Activated CD8-positive, alpha-beta T cell treated with anti-CD3 and anti-CD28 coated beads, Interleukin-2, amount 10 ng/mL, durations not matched to agents 7 days and 5 days (primary cell): ENCODE measurements at regions of chr12 and their contacts with region 1.

Region 1: DNA sequence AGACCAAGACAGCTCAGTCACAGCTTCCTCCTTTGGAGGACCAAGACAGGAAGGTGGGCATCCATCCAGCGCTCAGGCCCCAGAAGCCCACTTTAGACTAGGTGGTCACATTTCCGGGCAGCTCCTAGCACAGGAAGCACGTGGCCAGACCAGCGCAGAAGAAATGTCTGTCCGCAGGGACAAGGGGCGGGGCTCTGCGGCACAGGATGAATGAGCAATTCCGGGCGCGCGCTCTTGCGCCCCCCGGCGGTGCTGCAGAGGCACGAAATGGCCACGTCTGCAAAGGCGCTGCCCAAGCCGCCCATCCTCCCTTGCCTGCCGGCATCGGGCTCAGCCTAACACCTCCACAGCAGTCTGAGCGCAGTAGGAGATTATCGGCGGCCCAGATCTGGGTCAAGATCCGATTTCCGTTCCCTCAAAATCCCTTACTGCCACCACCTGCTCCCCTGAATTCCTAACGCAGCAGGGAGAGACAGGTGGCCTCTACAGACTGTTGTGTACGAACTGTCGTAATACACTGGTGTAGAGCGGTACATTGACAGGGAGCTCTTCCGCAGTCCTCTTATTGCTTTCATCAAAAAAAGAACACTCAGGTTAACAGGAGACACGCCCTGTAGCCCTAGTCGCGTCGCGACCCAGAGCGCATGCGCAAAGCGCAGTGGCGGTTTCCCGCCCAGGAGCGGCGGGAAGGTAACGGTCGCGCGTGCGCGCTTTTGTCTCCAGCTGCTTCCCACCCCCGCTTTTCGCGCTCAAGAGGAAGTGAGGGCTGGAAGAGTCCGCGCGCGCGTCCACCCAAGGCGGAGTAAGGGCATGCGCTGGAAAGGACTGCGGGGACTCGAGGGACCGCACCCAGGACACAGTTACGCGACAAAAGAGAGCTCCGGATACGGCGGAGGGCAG is 794 bp downstream of the TUBA1B start:
- DNase-seq: peak; percentile 93
- ATAC-seq: peak; percentile 59
- H3K4me3 Mint-ChIP-seq: peak overlapping the region; percentile 98
- H3K27ac Mint-ChIP-seq: peak overlapping the region; percentile 99
- H3K4me1 Mint-ChIP-seq: peaks cover 53% of the 10 kb centered on the region
- H3K27me3 Mint-ChIP-seq: no peaks in the 10 kb centered on the region

Region 2: GRCh38 chr12:49069507-49070346 is 60.7 kb before region 1 on chr12 and contains the start of gene RHEBL1:
- CTCF ChIA-PET with region 1: interaction called, 46 read pairs
- POLR2A ChIA-PET with region 1: interaction called, 39 read pairs
- DNase-seq: peak; percentile 100
- ATAC-seq: peak; percentile 100
- H3K4me3 Mint-ChIP-seq: peak within 1 kb of the TSS; percentile 100
- H3K27ac Mint-ChIP-seq: peak within 1 kb of the TSS; percentile 97
- H3K4me1 Mint-ChIP-seq: peaks cover 31% of the 10 kb centered on the region
- H3K27me3 Mint-ChIP-seq: no peaks in the 10 kb centered on the region
- total RNA-seq, gene RHEBL1: 9.5 to 9.9 TPM

Region 3: DNA sequence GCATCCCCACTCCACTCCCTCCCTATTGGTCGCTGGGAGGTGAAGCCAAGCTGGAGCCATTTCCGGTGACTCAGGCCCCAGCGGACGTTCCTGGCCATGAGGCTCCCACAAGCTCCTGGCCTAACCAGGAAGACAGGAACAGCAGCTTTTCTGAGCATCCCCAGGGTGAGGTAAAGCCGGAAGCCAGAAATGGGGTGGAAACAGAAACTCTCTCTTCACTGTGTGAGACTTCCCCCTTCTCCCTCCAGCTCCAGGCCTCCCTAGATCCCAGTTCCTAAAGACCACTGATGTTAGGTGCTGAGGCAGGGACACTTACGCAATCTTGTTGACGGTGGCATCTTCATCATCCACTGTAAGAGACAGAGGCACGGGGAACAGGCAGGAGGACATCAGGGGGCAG is 24.8 kb before region 1 on chr12:
- CTCF ChIA-PET with region 1: interaction called, 46 read pairs
- POLR2A ChIA-PET with region 1: interaction called, 165 read pairs
- DNase-seq: no peak
- ATAC-seq: no peak
- H3K4me3 Mint-ChIP-seq: no peak overlapping the region
- H3K27ac Mint-ChIP-seq: no peak overlapping the region
- H3K4me1 Mint-ChIP-seq: peaks cover 35% of the 10 kb centered on the region
- H3K27me3 Mint-ChIP-seq: no peaks in the 10 kb centered on the region

Region 4: GRCh38 chr12:49188914-49189367 is 58.5 kb after region 1 on chr12 and contains the start of gene TUBA1A:
- CTCF ChIA-PET with region 1: interaction called, 35 read pairs
- POLR2A ChIA-PET with region 1: interaction called, 173 read pairs
- DNase-seq: peak; percentile 99
- ATAC-seq: peak; percentile 89
- H3K4me3 Mint-ChIP-seq: peak within 1 kb of the TSS; percentile 88
- H3K27ac Mint-ChIP-seq: peak within 1 kb of the TSS; percentile 95
- H3K4me1 Mint-ChIP-seq: peaks cover 17% of the 10 kb centered on the region
- H3K27me3 Mint-ChIP-seq: peaks cover 4% of the 10 kb centered on the region
- total RNA-seq, gene TUBA1A: 117 to 120 TPM

Region 5: DNA sequence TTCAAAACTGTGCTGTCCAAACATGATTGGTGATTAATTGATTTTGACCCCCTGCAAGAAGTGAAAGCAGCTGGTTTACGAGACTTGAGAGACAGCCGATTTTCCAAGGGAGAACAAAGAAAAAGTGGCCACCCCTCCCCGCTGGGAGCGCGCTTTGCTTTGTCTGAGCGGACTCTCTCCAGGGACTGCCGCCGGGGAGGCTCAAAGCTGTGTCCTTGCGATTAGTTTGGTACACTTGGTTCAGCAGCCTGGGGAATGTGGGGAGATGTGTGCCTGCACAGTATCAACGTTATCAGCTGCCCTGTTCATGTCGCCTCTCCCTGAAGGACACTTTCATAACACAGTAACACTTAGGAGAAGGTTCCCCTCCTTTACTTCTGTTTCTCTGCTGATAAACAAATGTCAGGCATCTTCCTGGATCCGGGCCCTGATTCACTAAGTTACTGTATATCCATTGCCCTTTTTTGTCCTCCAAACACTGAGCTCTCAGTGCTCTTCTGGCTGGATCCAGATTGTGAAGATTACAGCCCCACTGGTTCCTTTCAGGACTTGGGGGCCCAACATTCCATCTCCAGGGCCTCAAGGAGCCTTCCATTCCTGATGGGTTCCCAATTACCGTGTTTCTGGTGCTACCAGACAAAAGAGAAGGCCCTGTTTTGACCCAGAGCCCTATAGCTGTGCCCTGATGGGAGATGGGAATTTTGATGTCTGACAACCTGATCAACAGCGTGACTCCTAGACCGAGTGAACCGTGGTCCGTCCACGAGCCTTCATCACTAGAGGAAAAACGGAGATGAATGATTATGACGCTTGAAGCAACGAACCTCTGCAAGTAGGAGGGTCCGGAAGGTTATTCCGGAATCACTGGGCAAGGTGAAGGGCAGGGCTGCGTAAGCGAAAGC is 102.8 kb after region 1 on chr12:
- CTCF ChIA-PET with region 1: interaction called, 21 read pairs
- POLR2A ChIA-PET with region 1: interaction called, 11 read pairs
- DNase-seq: no peak
- ATAC-seq: no peak
- H3K4me3 Mint-ChIP-seq: no peak overlapping the region
- H3K27ac Mint-ChIP-seq: peak overlapping the region; percentile 29
- H3K4me1 Mint-ChIP-seq: peaks cover 21% of the 10 kb centered on the region
- H3K27me3 Mint-ChIP-seq: peaks cover 10% of the 10 kb centered on the region

Region 6: GRCh38 chr12:49375406-49375805 is 245.0 kb after region 1 on chr12:
- CTCF ChIA-PET with region 1: no interaction called
- POLR2A ChIA-PET with region 1: no interaction called
- DNase-seq: no peak
- ATAC-seq: no peak
- H3K4me3 Mint-ChIP-seq: no peak overlapping the region
- H3K27ac Mint-ChIP-seq: no peak overlapping the region
- H3K4me1 Mint-ChIP-seq: peaks cover 14% of the 10 kb centered on the region
- H3K27me3 Mint-ChIP-seq: no peaks in the 10 kb centered on the region